ENCODE measurements at regions of chr7 and their contacts with region 1.

Region 1: DNA sequence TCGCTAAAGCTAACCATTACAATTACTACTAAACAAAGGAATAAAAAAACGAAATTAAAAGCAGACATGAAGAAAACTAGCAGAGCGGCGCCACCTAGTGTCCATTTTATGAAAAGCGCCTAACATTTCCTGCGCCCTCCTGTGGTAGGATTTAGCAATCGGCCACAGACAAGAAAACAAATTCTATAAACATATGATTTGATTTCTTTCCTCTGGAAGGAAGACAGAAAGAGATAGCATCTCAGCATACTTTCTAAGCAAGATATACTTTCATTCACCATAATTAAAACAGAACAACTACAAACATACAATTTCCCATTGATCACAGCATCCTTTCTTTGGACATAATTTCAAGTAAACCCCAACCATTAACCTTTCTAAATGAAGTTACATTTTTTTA is 337.7 kb upstream of the NPVF start:
- DNase-seq: peak; percentile 75
- ATAC-seq: peak; percentile 22; the same call in 1 of the 2 replicates
- H3K4me3 ChIP-seq: no peak overlapping the region
- H3K27ac ChIP-seq: no peak overlapping the region
- H3K4me1 ChIP-seq: no peaks in the 10 kb centered on the region
- H3K27me3 ChIP-seq: peaks cover 41% of the 10 kb centered on the region
- CTCF ChIP-seq: peak; percentile 100

Region 2: DNA sequence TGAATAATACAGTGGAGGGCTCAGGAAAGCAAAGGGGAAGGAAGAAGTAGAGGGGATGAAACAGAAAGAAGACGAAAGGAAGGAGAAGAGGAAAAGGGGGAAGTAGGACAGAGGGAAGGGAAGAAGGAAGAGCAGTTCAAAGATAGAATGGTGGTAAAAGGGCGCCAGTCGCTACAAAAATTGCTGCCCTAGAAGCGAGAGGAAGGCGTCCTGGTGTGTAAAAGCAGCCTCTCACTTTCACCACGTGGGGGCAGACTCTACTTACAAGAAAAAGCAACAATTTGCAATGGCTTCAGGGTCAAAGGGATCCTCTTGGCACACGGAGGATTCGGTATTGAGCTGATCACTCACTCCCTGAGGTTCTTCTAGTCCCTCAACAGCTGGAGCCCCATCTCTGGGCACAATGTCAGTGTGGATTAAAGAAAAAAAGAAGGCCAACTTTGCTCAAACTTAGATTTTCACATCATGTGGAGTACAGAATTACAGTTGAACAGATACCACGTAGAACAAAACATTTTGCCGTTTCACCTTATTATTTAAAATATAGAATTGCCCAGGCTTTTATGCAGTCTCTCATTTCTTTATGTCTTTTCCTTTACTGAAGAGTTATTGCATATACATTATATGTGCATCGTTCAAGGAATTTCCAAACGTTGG is 306.2 kb before region 1 on chr7:
- CTCF ChIA-PET with region 1: interaction called, 16 read pairs
- POLR2A ChIA-PET with region 1: no interaction called
- intact Hi-C with region 1: loop called (anchors 1 kb)
- DNase-seq: peak; percentile 66
- ATAC-seq: peak; percentile 78
- H3K4me3 ChIP-seq: no peak overlapping the region
- H3K27ac ChIP-seq: no peak overlapping the region
- H3K4me1 ChIP-seq: no peaks in the 10 kb centered on the region
- H3K27me3 ChIP-seq: peaks cover 54% of the 10 kb centered on the region
- CTCF ChIP-seq: peak; percentile 77

Region 3: GRCh38 chr7:25389489-25390106 is 176.4 kb before region 1 on chr7:
- CTCF ChIA-PET with region 1: interaction called, 8 read pairs
- POLR2A ChIA-PET with region 1: no interaction called
- intact Hi-C with region 1: loop called (anchors 1 kb)
- DNase-seq: peak; percentile 41
- ATAC-seq: peak; percentile 53
- H3K4me3 ChIP-seq: no peak overlapping the region
- H3K27ac ChIP-seq: no peak overlapping the region
- H3K4me1 ChIP-seq: no peaks in the 10 kb centered on the region
- H3K27me3 ChIP-seq: peaks cover 68% of the 10 kb centered on the region
- CTCF ChIP-seq: peak; percentile 59; the same call in 1 of the 2 replicates

Region 4: GRCh38 chr7:25851332-25852210 is 285.6 kb after region 1 on chr7:
- CTCF ChIA-PET with region 1: no interaction called
- POLR2A ChIA-PET with region 1: no interaction called
- intact Hi-C with region 1: loop called (anchors 1 kb)
- DNase-seq: peak; percentile 89
- ATAC-seq: peak; percentile 77
- H3K4me3 ChIP-seq: peak overlapping the region; percentile 53
- H3K27ac ChIP-seq: no peak overlapping the region
- H3K4me1 ChIP-seq: peaks cover 35% of the 10 kb centered on the region
- H3K27me3 ChIP-seq: peaks cover 68% of the 10 kb centered on the region
- CTCF ChIP-seq: peak; percentile 88